HCT116 (cell line): ENCODE measurements at regions of chr12 and their contacts with region 1.

Region 1: DNA sequence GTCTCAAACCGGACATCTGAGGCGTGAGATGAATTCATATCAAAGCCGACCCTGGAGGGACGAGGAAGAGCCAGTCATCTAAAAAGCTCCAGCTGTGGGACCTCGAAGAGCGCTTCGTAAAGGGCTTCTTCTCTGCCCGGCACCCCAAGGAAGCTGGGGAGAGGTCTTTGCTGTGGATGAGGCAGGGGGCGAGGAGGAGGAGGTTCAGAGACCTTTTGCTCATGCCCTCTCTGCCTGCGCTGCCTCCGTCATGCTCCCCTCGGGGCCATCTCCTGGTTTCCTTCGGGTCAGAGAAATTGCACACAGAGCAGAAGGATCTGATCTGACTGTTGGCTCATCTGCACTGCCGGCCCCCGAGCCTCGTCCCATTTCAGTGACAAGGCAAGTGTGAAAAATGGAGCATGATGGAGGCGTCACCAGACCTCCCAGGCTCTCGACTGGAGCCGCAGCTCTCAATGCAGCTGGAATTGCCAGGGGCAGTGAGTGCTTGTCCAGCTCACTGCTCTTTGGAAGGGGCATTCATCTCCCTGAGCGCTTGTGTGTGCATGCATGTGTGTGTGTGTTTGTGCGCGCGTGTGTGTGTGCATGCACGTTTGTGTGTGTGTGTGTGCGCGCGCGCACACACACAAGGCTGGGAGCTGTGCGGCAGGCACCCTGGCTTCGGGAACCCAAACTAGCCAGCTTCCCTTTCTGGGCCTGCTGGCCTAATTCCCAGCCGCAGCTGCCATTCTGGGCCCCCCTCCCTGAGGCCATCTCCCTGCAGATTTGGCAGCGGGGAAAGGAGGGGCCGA is 9.2 kb downstream of the CABP1 start:
- DNase-seq: no peak
- ATAC-seq: peak; percentile 6; the same call in 1 of the 2 replicates
- H3K4me3 ChIP-seq: peak overlapping the region in 1 of 2 experiments; percentile 59; a peak in 1 of 4 replicates
- H3K27ac ChIP-seq: no peak overlapping the region
- H3K4me1 ChIP-seq: peaks cover 5 to 32% of the 10 kb centered on the region in 2 experiments; a peak in 3 of 4 replicates
- H3K27me3 ChIP-seq: no peaks in the 10 kb centered on the region; the same call in 1 of the 2 replicates
- CTCF ChIP-seq: no peak
- POLR2A ChIP-seq: no peak
- RAD21 ChIP-seq: no peak

Region 2: GRCh38 chr12:120662879-120663278 is 13.2 kb after region 1 on chr12:
- CTCF ChIA-PET with region 1: interaction called, 10 read pairs
- POLR2A ChIA-PET with region 1: no interaction called
- RAD21 ChIA-PET with region 1: no interaction called
- intact Hi-C with region 1: no loop called
- DNase-seq: no peak
- ATAC-seq: no peak
- H3K4me3 ChIP-seq: no peak overlapping the region
- H3K27ac ChIP-seq: no peak overlapping the region
- H3K4me1 ChIP-seq: no peaks in the 10 kb centered on the region
- H3K27me3 ChIP-seq: peaks cover 4% of the 10 kb centered on the region; the same call in 1 of the 2 replicates
- CTCF ChIP-seq: no peak
- POLR2A ChIP-seq: no peak
- RAD21 ChIP-seq: no peak

Region 3: GRCh38 chr12:120710031-120710804 is 60.6 kb after region 1 on chr12 and contains the start of gene UNC119B:
- CTCF ChIA-PET with region 1: interaction called, 3 read pairs
- POLR2A ChIA-PET with region 1: no interaction called
- RAD21 ChIA-PET with region 1: no interaction called
- intact Hi-C with region 1: loop called (anchors 1 kb)
- DNase-seq: no peak
- ATAC-seq: peak; percentile 81
- H3K4me3 ChIP-seq: peak within 1 kb of the TSS; percentile 86 to 90
- H3K27ac ChIP-seq: peak within 1 kb of the TSS; percentile 90
- H3K4me1 ChIP-seq: peaks cover 11 to 15% of the 10 kb centered on the region in 2 experiments
- H3K27me3 ChIP-seq: no peaks in the 10 kb centered on the region
- CTCF ChIP-seq: no peak
- POLR2A ChIP-seq: no peak
- RAD21 ChIP-seq: no peak
- total RNA-seq, gene UNC119B: 33.8 TPM

Region 4: DNA sequence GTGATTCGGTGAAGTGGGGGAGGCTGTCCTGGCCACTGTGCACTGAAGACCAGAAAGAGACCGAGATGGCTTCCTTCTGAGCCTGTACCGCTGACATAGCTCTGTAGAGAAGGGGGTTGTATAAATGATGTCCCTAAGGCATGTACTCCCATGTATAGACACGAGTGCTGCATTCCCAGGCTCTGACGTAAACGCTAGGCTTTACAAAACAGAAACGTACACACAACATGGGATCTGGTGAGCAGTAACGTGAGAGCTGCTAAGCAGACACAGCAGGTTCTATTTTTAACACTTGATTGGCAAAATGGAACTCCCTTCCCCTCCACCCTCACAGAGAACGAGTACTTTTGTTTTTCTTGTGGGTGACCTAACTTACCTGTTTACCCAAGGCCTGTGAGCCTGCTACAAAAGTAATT is 111.9 kb after region 1 on chr12:
- CTCF ChIA-PET with region 1: no interaction called
- POLR2A ChIA-PET with region 1: no interaction called
- RAD21 ChIA-PET with region 1: no interaction called
- intact Hi-C with region 1: no loop called
- DNase-seq: no peak
- ATAC-seq: no peak
- H3K4me3 ChIP-seq: no peak overlapping the region
- H3K27ac ChIP-seq: no peak overlapping the region
- H3K4me1 ChIP-seq: no peaks in the 10 kb centered on the region
- H3K27me3 ChIP-seq: no peaks in the 10 kb centered on the region
- CTCF ChIP-seq: no peak
- POLR2A ChIP-seq: no peak
- RAD21 ChIP-seq: no peak

Region 5: DNA sequence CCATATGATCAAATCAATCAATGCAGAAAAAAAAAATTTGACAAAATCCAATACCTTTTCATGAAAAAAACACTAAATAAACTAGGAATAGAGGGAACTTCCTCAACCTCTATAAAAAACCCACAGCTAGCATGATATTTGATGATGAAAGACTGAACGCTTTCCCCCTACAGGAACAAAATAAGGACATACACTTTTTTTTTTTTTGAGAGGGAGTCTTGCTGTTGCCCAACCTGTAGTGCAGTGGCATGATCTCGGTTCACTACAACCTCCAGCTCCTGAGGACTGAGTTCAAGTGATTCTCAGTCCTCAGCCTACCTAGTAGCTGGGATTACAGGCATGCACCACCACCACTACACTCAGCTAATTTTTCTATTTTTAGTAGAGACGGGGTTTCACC is 664.8 kb after region 1 on chr12:
- CTCF ChIA-PET with region 1: no interaction called
- POLR2A ChIA-PET with region 1: no interaction called
- RAD21 ChIA-PET with region 1: no interaction called
- intact Hi-C with region 1: no loop called
- DNase-seq: no peak
- ATAC-seq: no peak
- H3K4me3 ChIP-seq: no peak overlapping the region
- H3K27ac ChIP-seq: no peak overlapping the region
- H3K4me1 ChIP-seq: peaks cover 0 to 4% of the 10 kb centered on the region in 2 experiments; a peak in 1 of 4 replicates
- H3K27me3 ChIP-seq: no peaks in the 10 kb centered on the region
- CTCF ChIP-seq: no peak
- POLR2A ChIP-seq: no peak
- RAD21 ChIP-seq: no peak

Region 6: DNA sequence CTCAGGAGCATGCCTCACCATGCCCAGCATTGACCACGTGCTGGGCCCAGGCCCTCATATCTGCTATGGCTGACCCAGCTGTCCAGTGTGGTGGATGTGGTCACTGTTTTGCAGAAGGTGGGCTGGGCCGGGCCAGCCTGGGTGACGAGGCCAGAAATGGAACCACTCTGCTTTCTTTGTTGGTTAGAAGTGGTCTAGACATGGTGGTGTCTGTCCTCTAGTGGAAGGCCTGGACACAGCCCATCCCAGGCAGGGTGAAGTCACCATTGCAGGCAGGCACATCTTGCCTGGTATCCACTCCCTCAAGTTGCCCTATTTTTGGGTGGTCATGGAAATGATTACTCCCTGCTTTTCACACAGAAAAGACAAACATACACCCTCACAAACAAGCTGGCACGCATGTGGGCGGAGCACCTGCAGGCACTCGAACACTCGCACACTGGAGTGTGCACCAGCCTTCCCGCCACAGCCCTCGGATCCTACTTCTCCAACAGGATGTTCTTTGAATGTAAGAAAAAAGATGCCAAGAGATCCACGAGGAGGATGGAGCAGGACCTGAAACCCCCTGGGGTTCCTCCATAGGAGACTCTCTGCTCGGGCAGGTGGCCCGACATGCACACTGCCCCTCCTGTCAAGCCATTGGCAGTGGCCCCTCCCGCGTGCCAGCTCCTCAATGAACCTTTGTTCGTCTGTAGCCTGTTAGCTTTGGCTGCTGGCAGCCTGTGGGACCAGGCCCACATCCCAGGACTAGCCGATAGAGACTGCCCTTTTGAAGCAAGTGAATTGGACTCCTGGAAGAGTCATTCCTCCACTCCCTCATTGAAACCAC is 1467.3 kb after region 1 on chr12:
- CTCF ChIA-PET with region 1: no interaction called
- POLR2A ChIA-PET with region 1: no interaction called
- RAD21 ChIA-PET with region 1: no interaction called
- intact Hi-C with region 1: no loop called
- DNase-seq: no peak
- ATAC-seq: no peak
- H3K4me3 ChIP-seq: no peak overlapping the region
- H3K27ac ChIP-seq: no peak overlapping the region
- H3K4me1 ChIP-seq: peaks cover 30 to 45% of the 10 kb centered on the region in 2 experiments
- H3K27me3 ChIP-seq: no peaks in the 10 kb centered on the region
- CTCF ChIP-seq: no peak
- POLR2A ChIP-seq: no peak
- RAD21 ChIP-seq: no peak